Aorta (tissue), 5 donors: ENCODE measurements at regions of chr16 and their contacts with region 1.

Region 1: DNA sequence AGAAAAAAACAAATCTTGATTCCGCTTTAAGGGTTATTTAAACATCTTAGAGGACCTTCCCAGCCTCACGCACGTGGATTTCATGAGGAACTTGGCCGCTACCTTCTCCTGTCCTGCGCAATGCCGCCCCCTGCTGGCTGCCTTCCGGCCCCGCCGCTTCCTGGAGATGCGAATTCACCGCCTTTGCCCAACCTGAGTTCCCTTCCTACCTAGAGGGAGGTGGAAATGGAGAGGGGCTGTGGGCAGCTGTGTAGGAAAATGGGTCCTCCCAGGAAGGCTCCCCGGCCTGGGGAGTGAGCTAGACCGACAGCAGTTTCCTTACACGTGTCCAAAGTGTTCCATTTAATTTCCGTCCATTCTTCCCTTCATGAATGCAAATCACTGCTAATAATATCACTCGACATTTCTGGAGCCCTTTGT is 1.0 kb upstream of the ABCC12 start:
- DNase-seq: peak; percentile 83 to 94
- ATAC-seq: peak; percentile 81
- H3K4me3 ChIP-seq: no peak overlapping the region
- H3K27ac ChIP-seq: no peak overlapping the region
- H3K4me1 ChIP-seq: no peaks in the 10 kb centered on the region
- H3K27me3 ChIP-seq: no peaks in the 10 kb centered on the region

Region 2: GRCh38 chr16:47141773-47142485 is 1014.9 kb before region 1 on chr16:
- intact Hi-C with region 1: loop called (anchors 2 to 5 kb)
- DNase-seq: peak; percentile 81 to 90
- ATAC-seq: peak; percentile 93
- H3K4me3 ChIP-seq: peak overlapping the region; percentile 8 to 18
- H3K27ac ChIP-seq: no peak overlapping the region
- H3K4me1 ChIP-seq: no peaks in the 10 kb centered on the region
- H3K27me3 ChIP-seq: no peaks in the 10 kb centered on the region

Region 3: GRCh38 chr16:47928008-47928407 is 228.8 kb before region 1 on chr16:
- intact Hi-C with region 1: no loop called
- DNase-seq: no peak
- ATAC-seq: no peak
- H3K4me3 ChIP-seq: no peak overlapping the region
- H3K27ac ChIP-seq: no peak overlapping the region
- H3K4me1 ChIP-seq: no peaks in the 10 kb centered on the region
- H3K27me3 ChIP-seq: no peaks in the 10 kb centered on the region